BJ (cell line): ENCODE measurements at regions of chr4 and their contacts with region 1.

Region 1: GRCh38 chr4:83124111-83124780 is 9.7 kb upstream of the PLAC8 start:
- DNase-seq: no peak
- H3K4me3 ChIP-seq: no peak overlapping the region
- H3K27me3 ChIP-seq: no peaks in the 10 kb centered on the region
- CTCF ChIP-seq: no peak

Region 2: GRCh38 chr4:83062739-83063138 is 61.5 kb before region 1 on chr4:
- CTCF ChIA-PET with region 1: no interaction called
- POLR2A ChIA-PET with region 1: interaction called, 12 read pairs
- DNase-seq: no peak
- H3K4me3 ChIP-seq: no peak overlapping the region
- H3K27me3 ChIP-seq: no peaks in the 10 kb centered on the region
- CTCF ChIP-seq: no peak